MCF 10A (cell line): ENCODE measurements at regions of chr18 and their contacts with region 1.

Region 1: DNA sequence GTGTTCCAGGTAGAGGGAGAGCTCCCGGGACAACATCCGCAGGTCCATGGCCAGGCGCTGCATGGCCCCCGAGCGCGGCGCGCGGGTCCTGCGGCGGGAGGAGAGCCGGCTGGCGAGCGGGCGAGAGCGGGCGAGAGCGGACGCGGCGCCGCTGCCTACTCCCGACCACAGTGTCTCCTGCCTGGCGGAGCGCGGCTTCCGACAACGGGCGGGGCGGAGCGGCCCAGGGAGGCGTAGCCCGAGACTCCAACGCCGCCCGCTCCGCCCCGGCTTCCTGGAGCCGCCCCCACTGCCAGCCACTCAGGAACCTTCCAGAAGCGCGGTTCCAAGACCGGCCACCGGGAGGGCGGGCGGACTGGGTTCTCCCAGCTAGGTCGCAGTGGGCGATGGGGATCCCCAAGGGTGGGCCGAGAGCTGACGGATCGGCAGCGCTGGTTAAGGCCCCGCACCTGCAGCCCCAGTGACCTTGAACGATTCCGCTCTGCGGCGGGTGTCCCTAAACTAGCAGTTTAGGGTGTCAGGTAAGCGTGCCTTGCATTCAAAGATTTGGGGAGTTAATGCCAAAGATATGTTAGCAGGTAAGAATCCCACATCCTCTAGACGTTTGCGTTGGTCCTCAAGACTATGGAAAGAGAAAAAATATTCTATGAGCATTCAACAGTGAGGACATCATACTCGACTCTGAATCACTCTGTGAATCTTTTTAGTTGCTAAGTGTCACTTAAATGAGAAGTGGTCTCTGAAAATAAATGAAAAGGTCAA is at the start of gene ABHD3:
- DNase-seq: peak; percentile 92
- H3K4me3 Mint-ChIP-seq: peak within 1 kb of the TSS; percentile 80
- H3K27ac Mint-ChIP-seq: peak within 1 kb of the TSS; percentile 67
- H3K4me1 Mint-ChIP-seq: peaks cover 4% of the 10 kb centered on the region
- H3K27me3 Mint-ChIP-seq: no peaks in the 10 kb centered on the region
- CTCF ChIP-seq: peak; percentile 42
- total RNA-seq, gene ABHD3: 2.9 and 5.5 TPM in 2 replicates

Region 2: DNA sequence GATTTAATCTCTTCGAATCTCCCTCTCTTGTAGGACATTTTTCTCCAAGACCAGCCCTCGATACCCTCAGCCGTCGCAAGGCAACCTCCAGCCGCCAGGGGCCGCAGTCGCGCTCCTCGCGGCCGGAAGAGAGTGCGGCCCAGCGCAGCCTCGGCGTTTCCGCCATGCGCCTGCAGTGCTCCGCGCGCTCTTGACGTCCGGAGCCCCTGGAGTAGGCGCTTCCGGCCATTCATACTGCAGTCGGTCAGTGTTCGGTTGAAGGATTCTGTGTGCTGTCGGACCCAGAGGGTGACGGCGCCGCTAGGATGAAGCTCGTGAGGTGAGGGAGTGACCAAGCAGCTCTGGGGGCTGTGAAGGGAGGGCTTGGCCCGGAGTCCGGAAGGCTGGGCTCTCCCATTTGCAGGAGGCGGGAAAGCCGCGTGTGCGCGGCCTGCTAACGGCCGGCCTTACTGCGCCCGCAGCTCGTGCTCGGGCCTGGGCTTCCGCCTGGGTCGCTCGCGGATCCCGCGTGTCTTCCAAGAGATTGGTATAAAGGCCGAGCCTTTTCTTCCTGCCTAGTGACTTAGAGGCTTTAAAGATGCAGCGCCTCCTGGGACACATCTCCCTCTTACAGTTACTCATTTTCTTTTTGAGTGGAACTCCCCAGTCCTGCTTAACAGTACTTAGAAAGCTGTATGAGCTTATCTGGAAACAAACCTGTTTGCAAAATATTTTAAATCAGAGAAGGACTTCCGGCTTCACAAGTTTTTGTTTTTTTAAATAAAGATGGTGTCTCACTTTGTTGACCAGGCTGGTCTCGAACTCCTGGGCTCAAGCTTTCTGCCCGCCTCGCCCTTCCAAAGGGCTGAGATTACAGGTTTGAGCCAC is 92.4 kb before region 1 on chr18 and contains the start of gene SNRPD1:
- CTCF ChIA-PET with region 1: interaction called, 6 read pairs
- POLR2A ChIA-PET with region 1: interaction called, 24 read pairs
- intact Hi-C with region 1: no loop called
- DNase-seq: peak; percentile 88
- H3K4me3 Mint-ChIP-seq: peak within 1 kb of the TSS; percentile 90
- H3K27ac Mint-ChIP-seq: peak within 1 kb of the TSS; percentile 96
- H3K4me1 Mint-ChIP-seq: peaks cover 6% of the 10 kb centered on the region
- H3K27me3 Mint-ChIP-seq: no peaks in the 10 kb centered on the region
- CTCF ChIP-seq: peak; percentile 93
- total RNA-seq, gene SNRPD1: 108 and 110 TPM in 2 replicates

Region 3: GRCh38 chr18:21632393-21632792 is 72.4 kb before region 1 on chr18:
- CTCF ChIA-PET with region 1: no interaction called
- POLR2A ChIA-PET with region 1: interaction called, 4 read pairs
- intact Hi-C with region 1: loop called (anchors 5 kb)
- DNase-seq: no peak
- H3K4me3 Mint-ChIP-seq: no peak overlapping the region
- H3K27ac Mint-ChIP-seq: no peak overlapping the region
- H3K4me1 Mint-ChIP-seq: no peaks in the 10 kb centered on the region
- H3K27me3 Mint-ChIP-seq: no peaks in the 10 kb centered on the region
- CTCF ChIP-seq: no peak

Region 4: DNA sequence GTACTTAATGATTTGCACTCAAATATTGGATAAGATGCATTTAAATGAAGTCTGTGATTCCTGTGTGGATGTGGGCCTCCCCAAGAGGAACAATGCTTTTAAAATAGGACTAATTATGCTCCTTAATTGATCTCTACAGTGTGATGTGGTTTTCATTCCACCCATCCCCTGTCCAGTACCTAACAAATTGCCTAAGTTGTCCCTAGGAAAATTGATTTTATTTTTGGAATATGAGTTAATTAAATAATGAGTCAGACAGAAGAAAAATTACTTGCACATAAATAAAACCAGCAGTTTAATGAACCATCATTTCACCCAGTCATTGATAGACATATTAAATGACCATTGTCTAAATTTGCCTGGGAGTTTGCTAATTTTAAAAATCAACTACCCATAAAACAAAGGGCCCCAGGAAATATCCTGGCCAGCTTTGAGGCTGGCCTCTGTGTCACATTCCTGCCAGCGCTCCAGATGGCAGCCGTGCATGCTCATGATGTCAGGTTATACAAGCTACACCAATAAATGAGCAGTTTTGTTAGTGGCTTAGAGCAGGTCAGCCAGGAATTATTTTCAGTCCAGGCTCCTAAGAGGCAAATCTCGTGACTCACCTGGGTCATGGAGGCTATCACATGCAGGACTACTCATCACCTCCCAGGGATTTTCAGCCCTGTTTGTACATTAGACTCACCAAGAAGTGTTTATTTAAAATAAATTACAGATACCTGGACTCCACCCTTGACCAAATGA is 32.1 kb before region 1 on chr18:
- CTCF ChIA-PET with region 1: interaction called, 5 read pairs
- POLR2A ChIA-PET with region 1: interaction called, 25 read pairs
- intact Hi-C with region 1: no loop called
- DNase-seq: peak; percentile 59
- H3K4me3 Mint-ChIP-seq: no peak overlapping the region
- H3K27ac Mint-ChIP-seq: peak overlapping the region; percentile 27
- H3K4me1 Mint-ChIP-seq: no peaks in the 10 kb centered on the region
- H3K27me3 Mint-ChIP-seq: no peaks in the 10 kb centered on the region
- CTCF ChIP-seq: no peak

Region 5: GRCh38 chr18:21740724-21741510 is 36.1 kb after region 1 on chr18 and contains the start of gene MIB1:
- CTCF ChIA-PET with region 1: no interaction called
- POLR2A ChIA-PET with region 1: interaction called, 97 read pairs
- intact Hi-C with region 1: loop called (anchors 1 kb)
- DNase-seq: no peak
- H3K4me3 Mint-ChIP-seq: peak within 1 kb of the TSS; percentile 87
- H3K27ac Mint-ChIP-seq: peak within 1 kb of the TSS; percentile 96
- H3K4me1 Mint-ChIP-seq: peaks cover 15% of the 10 kb centered on the region
- H3K27me3 Mint-ChIP-seq: no peaks in the 10 kb centered on the region
- CTCF ChIP-seq: no peak
- total RNA-seq, gene MIB1: 40.5 and 49.5 TPM in 2 replicates